Endothelial cell of umbilical vein (primary cell): ENCODE measurements at regions of chr12 and their contacts with region 1.

Region 1: GRCh38 chr12:56189176-56189917 is at the start of gene SMARCC2:
- DNase-seq: peak; percentile 88
- H3K4me3 ChIP-seq: peak within 1 kb of the TSS; percentile 70 to 95 (median 89)
- H3K27ac ChIP-seq: peak within 1 kb of the TSS; percentile 24
- H3K4me1 ChIP-seq: peaks cover 20% of the 10 kb centered on the region
- H3K27me3 ChIP-seq: no peaks in the 10 kb centered on the region
- CTCF ChIP-seq: peak; percentile 75 to 82
- POLR2A ChIP-seq: peak; percentile 41
- total RNA-seq, gene SMARCC2: 117 and 121 TPM in 2 replicates

Region 2: DNA sequence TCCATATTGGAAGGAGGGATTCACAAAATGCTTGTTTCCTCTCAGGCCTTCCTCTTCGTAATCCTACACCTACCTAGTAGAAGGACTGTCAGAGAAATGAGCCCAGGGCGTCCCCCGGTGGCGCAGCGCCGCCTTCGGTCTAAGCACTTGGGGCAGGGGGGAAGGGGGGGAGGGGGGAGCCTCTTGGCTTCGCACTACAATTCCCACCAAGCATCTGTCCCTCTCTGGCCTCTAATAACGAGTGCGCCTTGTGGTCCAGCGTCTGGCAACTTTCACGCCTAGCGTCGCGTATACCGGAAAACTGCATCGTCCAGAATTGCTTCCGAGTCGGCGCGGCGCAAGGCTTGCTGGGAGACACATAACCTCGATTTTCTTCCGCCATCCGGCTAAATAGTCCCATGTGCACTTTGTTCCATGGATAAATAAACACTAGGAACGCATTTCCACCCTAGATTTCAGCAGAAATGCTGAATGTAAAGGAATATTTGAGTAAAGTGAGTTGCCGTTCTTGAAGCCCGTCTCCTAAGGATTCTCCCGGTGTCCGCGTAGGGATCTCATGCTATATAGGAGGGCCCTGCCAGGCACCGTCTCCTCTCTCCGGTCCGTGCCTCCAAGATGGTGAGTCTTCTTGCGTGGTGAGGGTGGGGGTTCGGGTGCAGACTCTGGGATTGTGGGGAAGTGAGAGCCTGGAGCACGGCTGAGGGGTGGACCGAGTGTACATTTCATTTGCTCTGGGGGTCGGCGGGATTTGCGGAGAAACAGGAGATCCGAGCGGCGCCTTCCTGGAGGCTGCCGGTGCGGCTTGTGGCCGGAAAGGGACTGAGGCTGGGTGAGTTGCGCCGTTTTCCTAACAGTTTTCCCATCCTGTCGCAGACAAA is 147.6 kb before region 1 on chr12 and contains the start of gene RPS26:
- CTCF ChIA-PET with region 1: interaction called, 6 read pairs
- POLR2A ChIA-PET with region 1: no interaction called
- dilution Hi-C with region 1: no loop called
- intact Hi-C with region 1: loop called (anchors 1 kb)
- DNase-seq: peak; percentile 100
- H3K4me3 ChIP-seq: peak within 1 kb of the TSS; percentile 84 to 100 (median 87)
- H3K27ac ChIP-seq: peak within 1 kb of the TSS; percentile 95
- H3K4me1 ChIP-seq: peaks cover 17% of the 10 kb centered on the region
- H3K27me3 ChIP-seq: no peaks in the 10 kb centered on the region
- CTCF ChIP-seq: peak in 1 of 2 donors; percentile 46
- POLR2A ChIP-seq: peak; percentile 99
- total RNA-seq, gene RPS26: 57.3 and 66.7 TPM in 2 replicates

Region 3: GRCh38 chr12:56053407-56053893 is 135.9 kb before region 1 on chr12:
- CTCF ChIA-PET with region 1: no interaction called
- POLR2A ChIA-PET with region 1: no interaction called
- dilution Hi-C with region 1: no loop called
- intact Hi-C with region 1: no loop called
- DNase-seq: no peak
- H3K4me3 ChIP-seq: no peak overlapping the region
- H3K27ac ChIP-seq: no peak overlapping the region
- H3K4me1 ChIP-seq: no peaks in the 10 kb centered on the region
- H3K27me3 ChIP-seq: no peaks in the 10 kb centered on the region
- CTCF ChIP-seq: no peak
- POLR2A ChIP-seq: no peak

Region 4: GRCh38 chr12:56127888-56128669 is 61.3 kb before region 1 on chr12 and contains the start of gene ESYT1:
- CTCF ChIA-PET with region 1: interaction called, 236 read pairs
- POLR2A ChIA-PET with region 1: interaction called, 4 read pairs
- dilution Hi-C with region 1: no loop called
- intact Hi-C with region 1: loop called (anchors 1 kb)
- DNase-seq: peak; percentile 100
- H3K4me3 ChIP-seq: peak within 1 kb of the TSS; percentile 63 to 75 (median 68)
- H3K27ac ChIP-seq: peak within 1 kb of the TSS; percentile 46
- H3K4me1 ChIP-seq: peaks cover 28% of the 10 kb centered on the region
- H3K27me3 ChIP-seq: no peaks in the 10 kb centered on the region
- CTCF ChIP-seq: no peak
- POLR2A ChIP-seq: peak; percentile 82
- total RNA-seq, gene ESYT1: 133 and 161 TPM in 2 replicates

Region 5: GRCh38 chr12:56178347-56178746 is 11.0 kb before region 1 on chr12:
- CTCF ChIA-PET with region 1: interaction called, 15 read pairs
- POLR2A ChIA-PET with region 1: no interaction called
- dilution Hi-C with region 1: no loop called
- intact Hi-C with region 1: no loop called
- DNase-seq: no peak
- H3K4me3 ChIP-seq: no peak overlapping the region
- H3K27ac ChIP-seq: no peak overlapping the region
- H3K4me1 ChIP-seq: no peaks in the 10 kb centered on the region
- H3K27me3 ChIP-seq: no peaks in the 10 kb centered on the region
- CTCF ChIP-seq: no peak
- POLR2A ChIP-seq: no peak

Region 6: GRCh38 chr12:56258057-56258819 is 68.9 kb after region 1 on chr12 and contains the start of gene ANKRD52:
- CTCF ChIA-PET with region 1: interaction called, 50 read pairs
- POLR2A ChIA-PET with region 1: no interaction called
- dilution Hi-C with region 1: no loop called
- intact Hi-C with region 1: loop called (anchors 1 kb)
- DNase-seq: peak; percentile 76
- H3K4me3 ChIP-seq: peak within 1 kb of the TSS; percentile 84 to 96 (median 91)
- H3K27ac ChIP-seq: peak within 1 kb of the TSS; percentile 22
- H3K4me1 ChIP-seq: peaks cover 18% of the 10 kb centered on the region
- H3K27me3 ChIP-seq: no peaks in the 10 kb centered on the region
- CTCF ChIP-seq: peak; percentile 67 to 74
- POLR2A ChIP-seq: peak; percentile 57
- total RNA-seq, gene ANKRD52: 62.0 and 66.3 TPM in 2 replicates

Region 7: GRCh38 chr12:56468216-56469006 is 279.1 kb after region 1 on chr12 and contains the start of gene SPRYD4:
- CTCF ChIA-PET with region 1: interaction called, 5 read pairs
- POLR2A ChIA-PET with region 1: no interaction called
- dilution Hi-C with region 1: no loop called
- intact Hi-C with region 1: loop called (anchors 2 kb)
- DNase-seq: peak; percentile 92
- H3K4me3 ChIP-seq: peak within 1 kb of the TSS; percentile 66 to 93 (median 93)
- H3K27ac ChIP-seq: peak within 1 kb of the TSS; percentile 58
- H3K4me1 ChIP-seq: peaks cover 7% of the 10 kb centered on the region
- H3K27me3 ChIP-seq: no peaks in the 10 kb centered on the region
- CTCF ChIP-seq: peak; percentile 8 to 14
- POLR2A ChIP-seq: peak; percentile 97
- total RNA-seq, gene SPRYD4: 3.4 and 3.5 TPM in 2 replicates